ENCODE measurements at regions of chr1 and their contacts with region 1.

Region 1: DNA sequence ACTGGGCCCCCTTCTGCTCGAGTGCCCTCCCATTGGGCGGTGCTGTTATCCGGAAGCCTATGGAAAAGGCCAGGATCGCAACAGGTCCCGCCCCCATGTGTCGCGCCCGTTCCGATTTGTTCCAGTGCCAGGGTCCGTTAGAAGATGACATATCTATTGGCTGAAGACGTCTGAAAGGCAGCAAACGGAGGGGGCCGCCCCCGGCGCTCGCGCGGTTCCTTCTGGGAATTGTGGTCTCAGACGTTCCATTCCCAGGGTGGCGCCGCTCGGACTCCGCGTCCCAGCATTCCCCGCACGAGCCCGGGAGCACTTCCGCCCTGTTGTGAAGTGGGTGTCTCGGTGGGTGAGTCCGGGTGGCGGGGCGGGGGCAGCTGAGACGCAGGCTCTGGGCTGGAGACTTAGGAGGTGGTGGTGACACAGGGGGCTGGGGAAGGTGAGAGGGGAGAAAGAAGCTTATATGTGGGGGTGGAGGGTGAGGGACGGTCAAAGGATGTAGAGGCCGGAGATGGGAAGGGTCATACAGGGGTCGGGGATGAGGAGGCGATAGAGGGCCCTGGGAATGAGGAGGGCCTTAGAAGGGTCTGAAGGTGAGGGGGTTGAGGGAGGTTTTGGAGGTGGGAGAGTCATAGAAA is at the start of gene ZSCAN20:
- DNase-seq: peak; percentile 80
- ATAC-seq: peak; percentile 70
- H3K4me3 ChIP-seq: peak within 1 kb of the TSS; percentile 67
- H3K27ac ChIP-seq: no peak within 1 kb of the TSS
- H3K4me1 ChIP-seq: no peaks in the 10 kb centered on the region
- H3K27me3 ChIP-seq: peaks cover 7% of the 10 kb centered on the region; the same call in 1 of the 2 replicates
- CTCF ChIP-seq: no peak
- total RNA-seq, gene ZSCAN20: 0.84 and 1.6 TPM in 2 replicates

Region 2: DNA sequence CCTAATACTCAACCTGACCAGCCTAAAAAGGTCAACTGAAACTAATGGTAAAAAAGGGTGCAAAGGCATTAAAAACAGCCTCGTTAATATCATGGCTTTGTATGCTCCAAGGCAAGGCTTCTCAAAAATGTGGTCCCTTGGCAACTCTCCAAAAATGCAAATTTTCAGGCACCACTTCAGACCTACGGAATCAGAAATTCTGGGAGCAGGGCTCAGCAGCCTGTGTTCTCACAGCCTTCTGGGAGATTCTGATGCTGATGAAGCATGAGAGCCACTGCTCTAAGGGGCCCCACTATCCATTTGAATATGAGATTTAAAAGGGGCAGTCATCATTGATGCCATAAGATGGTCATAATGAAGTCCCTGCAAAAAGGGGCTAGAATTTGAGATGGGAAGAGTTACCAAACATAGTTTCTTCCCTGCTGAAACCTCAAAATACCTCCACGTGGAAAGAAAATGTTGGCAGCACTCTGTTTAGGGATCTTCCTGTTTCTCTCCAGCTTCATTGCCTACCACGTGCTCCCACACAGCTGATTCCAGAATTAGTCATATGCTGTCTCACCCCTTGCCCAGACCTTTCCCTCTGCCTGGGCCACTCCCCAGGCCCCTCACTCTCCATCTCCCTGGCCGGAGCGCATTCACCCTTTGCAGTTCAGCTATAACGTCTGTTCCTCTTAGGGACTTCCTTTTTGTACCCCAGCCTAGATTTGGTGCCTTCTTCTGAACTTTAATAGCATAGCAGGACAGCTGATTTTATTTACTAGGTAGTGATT is 88.2 kb before region 1 on chr1:
- CTCF ChIA-PET with region 1: no interaction called
- POLR2A ChIA-PET with region 1: no interaction called
- intact Hi-C with region 1: loop called (anchors 5 kb)
- DNase-seq: peak; percentile 55
- ATAC-seq: peak; percentile 70
- H3K4me3 ChIP-seq: no peak overlapping the region
- H3K27ac ChIP-seq: no peak overlapping the region
- H3K4me1 ChIP-seq: peaks cover 17% of the 10 kb centered on the region
- H3K27me3 ChIP-seq: no peaks in the 10 kb centered on the region
- CTCF ChIP-seq: no peak

Region 3: GRCh38 chr1:33500547-33500946 is 28.1 kb after region 1 on chr1:
- CTCF ChIA-PET with region 1: no interaction called
- POLR2A ChIA-PET with region 1: no interaction called
- intact Hi-C with region 1: no loop called
- DNase-seq: no peak
- ATAC-seq: no peak
- H3K4me3 ChIP-seq: no peak overlapping the region
- H3K27ac ChIP-seq: no peak overlapping the region
- H3K4me1 ChIP-seq: no peaks in the 10 kb centered on the region
- H3K27me3 ChIP-seq: no peaks in the 10 kb centered on the region
- CTCF ChIP-seq: peak; percentile 57

Region 4: DNA sequence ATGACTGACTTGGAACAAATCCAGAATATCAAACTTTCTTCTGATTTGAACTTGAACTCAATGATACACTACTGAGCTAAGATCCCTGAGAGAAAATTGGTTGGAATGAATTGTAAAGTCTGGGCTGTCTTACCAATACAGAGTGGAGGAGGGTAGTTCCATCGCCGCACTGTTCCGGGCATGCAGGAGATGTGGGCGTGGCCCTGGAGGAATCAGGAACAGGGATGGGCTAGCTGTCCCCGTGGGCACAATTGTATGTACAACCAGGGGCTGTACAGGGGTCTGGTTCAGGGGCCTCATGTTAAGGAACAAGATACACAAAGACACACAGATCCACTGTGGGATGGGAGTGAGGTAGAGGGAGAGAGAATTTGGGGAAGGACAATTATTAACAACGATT is 144.3 kb after region 1 on chr1:
- CTCF ChIA-PET with region 1: interaction called, 3 read pairs
- POLR2A ChIA-PET with region 1: no interaction called
- intact Hi-C with region 1: loop called (anchors 1 kb)
- DNase-seq: no peak
- ATAC-seq: no peak
- H3K4me3 ChIP-seq: no peak overlapping the region
- H3K27ac ChIP-seq: no peak overlapping the region
- H3K4me1 ChIP-seq: no peaks in the 10 kb centered on the region
- H3K27me3 ChIP-seq: peaks cover 81% of the 10 kb centered on the region
- CTCF ChIP-seq: no peak